ENCODE measurements at regions of chr22 and their contacts with region 1.

Region 1: DNA sequence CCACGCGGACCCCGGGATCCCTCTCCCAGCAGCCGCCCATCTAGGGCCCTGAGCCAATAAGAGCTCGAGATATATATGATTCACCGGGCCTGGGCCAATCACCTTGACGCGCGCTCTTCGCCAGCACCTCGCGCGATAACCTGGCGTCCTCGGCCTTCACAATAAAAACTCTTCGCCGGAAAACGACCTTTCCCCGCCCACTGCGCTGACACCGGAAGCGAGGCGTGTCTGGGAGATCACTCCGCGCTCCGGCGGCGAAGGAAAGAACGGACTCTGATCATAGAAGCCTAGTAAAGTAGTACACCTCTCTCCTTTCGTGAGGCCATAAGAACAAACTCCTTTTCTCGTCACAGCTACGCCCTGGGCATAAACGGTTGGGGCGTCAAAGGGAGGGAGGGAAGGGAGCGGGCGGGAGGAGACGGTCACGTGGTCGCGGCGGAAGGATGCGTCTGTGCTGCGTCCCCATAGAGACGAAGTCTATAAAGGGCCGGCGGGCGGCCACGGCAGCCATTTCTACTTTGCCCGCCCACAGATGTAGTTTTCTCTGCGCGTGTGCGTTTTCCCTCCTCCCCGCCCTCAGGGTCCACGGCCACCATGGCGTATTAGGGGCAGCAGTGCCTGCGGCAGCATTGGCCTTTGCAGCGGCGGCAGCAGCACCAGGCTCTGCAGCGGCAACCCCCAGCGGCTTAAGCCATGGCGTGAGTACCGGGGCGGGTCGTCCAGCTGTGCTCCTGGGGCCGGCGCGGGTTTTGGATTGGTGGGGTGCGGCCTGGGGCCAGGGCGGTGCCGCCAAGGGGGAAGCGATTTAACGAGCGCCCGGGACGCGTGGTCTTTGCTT is at the start of gene ATF4:
- DNase-seq: peak; percentile 93 to 99 (median 95)
- ATAC-seq: peak; percentile 89
- H3K4me3 ChIP-seq: peak within 1 kb of the TSS; percentile 98 to 99
- H3K4me3 Mint-ChIP-seq: peak within 1 kb of the TSS; percentile 98
- H3K27ac ChIP-seq: peak within 1 kb of the TSS; percentile 87 to 88
- H3K27ac Mint-ChIP-seq: peak within 1 kb of the TSS; percentile 99
- H3K4me1 ChIP-seq: peaks cover 48% of the 10 kb centered on the region
- H3K4me1 Mint-ChIP-seq: peaks cover 44% of the 10 kb centered on the region
- H3K27me3 ChIP-seq: no peaks in the 10 kb centered on the region
- H3K27me3 Mint-ChIP-seq: no peaks in the 10 kb centered on the region
- CTCF ChIP-seq: no peak
- total RNA-seq, gene ATF4: 327 to 329 TPM

Region 2: GRCh38 chr22:38755911-38756532 is 764.3 kb before region 1 on chr22 and contains the start of gene SUN2:
- CTCF ChIA-PET with region 1: no interaction called
- POLR2A ChIA-PET with region 1: no interaction called
- intact Hi-C with region 1: loop called in 1 of 2 experiments (anchors 10 kb)
- DNase-seq: peak; percentile 90 to 97 (median 94)
- ATAC-seq: peak; percentile 66
- H3K4me3 ChIP-seq: peak within 1 kb of the TSS; percentile 91 to 96
- H3K4me3 Mint-ChIP-seq: peak within 1 kb of the TSS; percentile 98
- H3K27ac ChIP-seq: peak within 1 kb of the TSS; percentile 65 to 73
- H3K27ac Mint-ChIP-seq: peak within 1 kb of the TSS; percentile 99
- H3K4me1 ChIP-seq: peaks cover 57% of the 10 kb centered on the region
- H3K4me1 Mint-ChIP-seq: peaks cover 58% of the 10 kb centered on the region
- H3K27me3 ChIP-seq: no peaks in the 10 kb centered on the region
- H3K27me3 Mint-ChIP-seq: no peaks in the 10 kb centered on the region
- CTCF ChIP-seq: no peak
- total RNA-seq, gene SUN2: 431 to 454 TPM

Region 3: DNA sequence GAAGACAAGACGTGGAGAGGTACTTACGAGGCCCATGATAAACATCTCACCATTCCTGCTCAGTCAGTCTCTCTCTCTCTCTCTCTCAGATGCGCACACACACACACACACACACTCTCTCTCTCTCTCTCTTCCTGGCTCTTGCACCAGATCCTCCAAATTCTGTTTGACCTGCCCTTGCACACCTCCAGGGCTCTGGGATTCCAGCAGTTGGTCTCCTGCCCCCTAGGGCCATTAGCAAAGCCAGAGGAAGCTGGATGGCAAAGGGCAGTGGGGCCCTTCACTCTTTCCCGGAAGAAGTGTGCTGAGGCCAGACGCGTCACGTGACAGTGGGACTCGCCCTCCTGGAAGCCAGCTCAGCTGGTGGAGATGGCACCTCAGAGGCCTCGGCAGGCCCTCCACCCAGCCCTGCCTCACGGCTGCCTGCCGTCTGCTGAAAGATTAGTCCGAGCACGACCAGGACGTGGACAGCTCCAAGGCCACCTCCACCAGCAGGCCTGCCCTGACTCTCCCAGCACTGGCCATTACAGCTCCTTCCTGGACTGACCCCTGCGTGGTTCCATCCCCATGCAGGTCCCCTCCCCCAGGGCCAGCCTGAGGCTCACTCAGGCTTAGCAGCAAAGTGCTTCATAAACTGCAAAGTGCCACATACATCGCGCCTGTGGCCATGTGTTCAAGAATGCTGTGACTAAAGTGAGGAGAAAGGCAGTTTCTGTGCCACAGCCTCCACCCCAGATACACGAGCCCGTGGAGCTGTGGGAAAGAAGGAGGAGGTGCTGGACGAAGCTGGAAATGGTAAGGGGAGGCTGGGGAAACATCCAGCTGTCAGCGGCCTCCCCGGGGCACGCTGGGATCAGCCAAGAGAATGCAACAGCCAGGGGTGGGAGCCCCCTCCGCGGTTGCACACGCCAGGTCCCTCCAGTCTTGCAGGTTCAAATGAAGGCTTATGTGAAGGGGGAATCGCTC is 279.2 kb before region 1 on chr22:
- CTCF ChIA-PET with region 1: no interaction called
- POLR2A ChIA-PET with region 1: no interaction called
- intact Hi-C with region 1: loop called in 1 of 2 experiments (anchors 10 kb)
- DNase-seq: peak in 6 of 9 experiments; percentile 14 to 76 (median 60)
- ATAC-seq: peak; percentile 9
- H3K4me3 ChIP-seq: peak overlapping the region; percentile 17 to 44
- H3K4me3 Mint-ChIP-seq: peak overlapping the region; percentile 93
- H3K27ac ChIP-seq: peak overlapping the region; percentile 21 to 54
- H3K27ac Mint-ChIP-seq: peak overlapping the region; percentile 95
- H3K4me1 ChIP-seq: peaks cover 60% of the 10 kb centered on the region
- H3K4me1 Mint-ChIP-seq: peaks cover 65% of the 10 kb centered on the region
- H3K27me3 ChIP-seq: peaks cover 3 to 20% of the 10 kb centered on the region in 2 experiments
- H3K27me3 Mint-ChIP-seq: peaks cover 2% of the 10 kb centered on the region
- CTCF ChIP-seq: no peak

Region 4: GRCh38 chr22:39395936-39396796 is 124.1 kb before region 1 on chr22:
- CTCF ChIA-PET with region 1: interaction called, 3 read pairs
- POLR2A ChIA-PET with region 1: interaction called, 5 read pairs
- intact Hi-C with region 1: loop called (anchors 1 to 2 kb)
- DNase-seq: no peak
- ATAC-seq: no peak
- H3K4me3 ChIP-seq: no peak overlapping the region
- H3K4me3 Mint-ChIP-seq: no peak overlapping the region
- H3K27ac ChIP-seq: no peak overlapping the region
- H3K27ac Mint-ChIP-seq: no peak overlapping the region
- H3K4me1 ChIP-seq: peaks cover 10% of the 10 kb centered on the region
- H3K4me1 Mint-ChIP-seq: peaks cover 9% of the 10 kb centered on the region
- H3K27me3 ChIP-seq: no peaks in the 10 kb centered on the region
- H3K27me3 Mint-ChIP-seq: no peaks in the 10 kb centered on the region
- CTCF ChIP-seq: no peak

Region 5: GRCh38 chr22:39496131-39496838 is 24.0 kb before region 1 on chr22:
- CTCF ChIA-PET with region 1: interaction called, 287 read pairs
- POLR2A ChIA-PET with region 1: interaction called, 20 read pairs
- intact Hi-C with region 1: loop called in 1 of 2 experiments (anchors 2 kb)
- DNase-seq: peak in 8 of 9 experiments; percentile 28 to 63 (median 52)
- ATAC-seq: peak; percentile 75
- H3K4me3 ChIP-seq: no peak overlapping the region
- H3K4me3 Mint-ChIP-seq: no peak overlapping the region
- H3K27ac ChIP-seq: no peak overlapping the region
- H3K27ac Mint-ChIP-seq: no peak overlapping the region
- H3K4me1 ChIP-seq: no peaks in the 10 kb centered on the region
- H3K4me1 Mint-ChIP-seq: peaks cover 8% of the 10 kb centered on the region
- H3K27me3 ChIP-seq: no peaks in the 10 kb centered on the region
- H3K27me3 Mint-ChIP-seq: no peaks in the 10 kb centered on the region
- CTCF ChIP-seq: peak; percentile 71

Region 6: GRCh38 chr22:39559454-39560105 is 39.3 kb after region 1 on chr22:
- CTCF ChIA-PET with region 1: no interaction called
- POLR2A ChIA-PET with region 1: no interaction called
- intact Hi-C with region 1: no loop called
- DNase-seq: no peak
- ATAC-seq: no peak
- H3K4me3 ChIP-seq: no peak overlapping the region
- H3K4me3 Mint-ChIP-seq: no peak overlapping the region
- H3K27ac ChIP-seq: no peak overlapping the region
- H3K27ac Mint-ChIP-seq: no peak overlapping the region
- H3K4me1 ChIP-seq: peaks cover 10% of the 10 kb centered on the region
- H3K4me1 Mint-ChIP-seq: peaks cover 6% of the 10 kb centered on the region
- H3K27me3 ChIP-seq: peaks cover 17 to 24% of the 10 kb centered on the region in 2 experiments
- H3K27me3 Mint-ChIP-seq: peaks cover 32% of the 10 kb centered on the region
- CTCF ChIP-seq: no peak

Region 7: DNA sequence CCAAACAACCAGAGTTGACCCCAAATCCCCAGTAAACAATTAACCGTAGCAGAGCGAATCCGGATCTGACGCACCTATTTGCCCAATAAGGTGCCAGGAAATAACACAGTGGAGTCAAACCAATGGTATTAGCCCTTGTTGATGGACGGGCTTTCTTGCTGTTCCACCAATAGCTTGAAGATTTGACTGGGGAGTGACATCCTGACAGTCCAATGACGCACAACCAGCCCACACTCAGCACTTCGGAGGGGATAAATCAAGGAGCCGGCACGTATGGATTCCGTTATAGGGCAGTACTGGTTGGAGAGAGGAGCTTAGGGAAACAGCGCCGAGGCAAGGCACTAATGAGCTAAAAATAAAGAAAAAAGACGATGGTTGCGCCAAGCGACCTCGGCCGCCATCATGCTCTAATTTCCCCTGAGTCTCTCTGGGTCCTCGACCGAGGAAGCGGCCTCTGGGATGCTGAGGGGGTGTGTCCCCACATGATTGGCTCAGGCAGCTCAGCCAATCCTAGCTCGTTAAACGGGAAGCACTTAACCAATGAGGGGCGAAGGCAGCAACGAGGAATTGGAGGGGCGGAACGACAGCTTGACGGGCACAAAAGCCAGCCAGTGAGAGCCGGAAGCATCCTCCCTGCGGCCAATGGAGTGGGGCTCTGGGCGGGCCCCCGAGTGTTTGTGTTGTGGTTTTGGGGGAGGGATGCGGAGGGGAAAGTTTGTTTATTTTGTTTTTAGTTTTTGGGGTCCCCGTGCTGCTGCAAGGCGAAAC is 524.0 kb after region 1 on chr22:
- CTCF ChIA-PET with region 1: no interaction called
- POLR2A ChIA-PET with region 1: interaction called, 8 read pairs
- intact Hi-C with region 1: loop called in 1 of 2 experiments (anchors 1 kb)
- DNase-seq: peak; percentile 95 to 100 (median 99)
- ATAC-seq: peak; percentile 86
- H3K4me3 ChIP-seq: peak overlapping the region; percentile 80 to 84
- H3K4me3 Mint-ChIP-seq: peak overlapping the region; percentile 94
- H3K27ac ChIP-seq: peak overlapping the region; percentile 97 to 98
- H3K27ac Mint-ChIP-seq: peak overlapping the region; percentile 100
- H3K4me1 ChIP-seq: peaks cover 28% of the 10 kb centered on the region
- H3K4me1 Mint-ChIP-seq: peaks cover 39% of the 10 kb centered on the region
- H3K27me3 ChIP-seq: no peaks in the 10 kb centered on the region
- H3K27me3 Mint-ChIP-seq: peaks cover 8% of the 10 kb centered on the region
- CTCF ChIP-seq: no peak

Measured in CD8-positive, alpha-beta T cell (primary cell).